ENCODE measurements at regions of chr14 and their contacts with region 1.

Region 1: GRCh38 chr14:30621940-30622830 is at the start of gene SCFD1:
- DNase-seq: peak; percentile 95
- H3K4me3 Mint-ChIP-seq: peak within 1 kb of the TSS; percentile 96
- H3K27ac Mint-ChIP-seq: peak within 1 kb of the TSS; percentile 94
- H3K4me1 Mint-ChIP-seq: peaks cover 35% of the 10 kb centered on the region
- H3K27me3 Mint-ChIP-seq: no peaks in the 10 kb centered on the region
- total RNA-seq, gene SCFD1: 46.1 to 55.2 TPM

Region 2: GRCh38 chr14:29927376-29928116 is 694.6 kb before region 1 on chr14 and contains the start of gene PRKD1:
- CTCF ChIA-PET with region 1: no interaction called
- intact Hi-C with region 1: no loop called
- DNase-seq: no peak
- H3K4me3 Mint-ChIP-seq: peak within 1 kb of the TSS; percentile 49
- H3K27ac Mint-ChIP-seq: no peak within 1 kb of the TSS
- H3K4me1 Mint-ChIP-seq: peaks cover 7% of the 10 kb centered on the region
- H3K27me3 Mint-ChIP-seq: peaks cover 39% of the 10 kb centered on the region
- total RNA-seq, gene PRKD1: not detected

Region 3: GRCh38 chr14:30558675-30559555 is 63.3 kb before region 1 on chr14 and contains the start of gene G2E3:
- CTCF ChIA-PET with region 1: interaction called, 3 read pairs
- intact Hi-C with region 1: loop called (anchors 1 kb)
- DNase-seq: peak; percentile 92
- H3K4me3 Mint-ChIP-seq: peak within 1 kb of the TSS; percentile 100
- H3K27ac Mint-ChIP-seq: peak within 1 kb of the TSS; percentile 99
- H3K4me1 Mint-ChIP-seq: peaks cover 30% of the 10 kb centered on the region
- H3K27me3 Mint-ChIP-seq: no peaks in the 10 kb centered on the region
- total RNA-seq, gene G2E3: 28.6 to 29.1 TPM

Region 4: DNA sequence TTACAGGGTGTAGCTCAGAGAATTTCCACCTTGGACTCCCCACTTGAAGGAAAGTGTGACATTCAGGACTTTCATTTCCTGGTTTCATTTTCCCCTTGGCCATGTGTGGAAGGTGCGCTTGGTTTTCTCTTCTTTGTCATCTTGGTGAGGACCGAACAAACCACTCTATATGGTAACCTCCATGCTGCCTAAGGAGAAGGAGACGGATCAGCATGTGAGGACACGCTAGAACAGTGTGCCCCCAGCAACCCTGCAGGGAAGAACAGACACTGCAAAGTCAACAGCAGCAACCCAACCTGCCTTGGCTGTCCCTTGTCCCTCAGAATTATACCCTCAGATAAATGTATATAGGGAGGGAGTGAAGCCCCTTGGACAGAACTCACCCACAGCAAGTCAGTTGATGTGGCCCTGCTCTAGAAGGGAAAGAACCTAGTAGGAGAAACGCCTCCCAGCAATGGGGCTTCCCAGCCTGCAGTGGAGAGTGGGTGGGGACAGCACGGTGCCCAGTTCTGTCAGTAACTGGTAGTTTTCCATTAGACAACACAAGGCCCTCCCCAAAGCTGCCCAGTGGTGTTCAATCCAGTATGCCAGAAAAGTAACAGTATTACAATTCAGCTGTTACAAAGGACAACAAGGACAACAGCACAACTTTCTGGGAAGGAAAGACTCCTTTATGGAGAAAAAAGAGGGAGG is 233.3 kb after region 1 on chr14:
- CTCF ChIA-PET with region 1: no interaction called
- intact Hi-C with region 1: loop called (anchors 1 kb)
- DNase-seq: peak; percentile 61
- H3K4me3 Mint-ChIP-seq: no peak overlapping the region
- H3K27ac Mint-ChIP-seq: peak overlapping the region; percentile 12
- H3K4me1 Mint-ChIP-seq: peaks cover 17% of the 10 kb centered on the region
- H3K27me3 Mint-ChIP-seq: peaks cover 17% of the 10 kb centered on the region

Region 5: DNA sequence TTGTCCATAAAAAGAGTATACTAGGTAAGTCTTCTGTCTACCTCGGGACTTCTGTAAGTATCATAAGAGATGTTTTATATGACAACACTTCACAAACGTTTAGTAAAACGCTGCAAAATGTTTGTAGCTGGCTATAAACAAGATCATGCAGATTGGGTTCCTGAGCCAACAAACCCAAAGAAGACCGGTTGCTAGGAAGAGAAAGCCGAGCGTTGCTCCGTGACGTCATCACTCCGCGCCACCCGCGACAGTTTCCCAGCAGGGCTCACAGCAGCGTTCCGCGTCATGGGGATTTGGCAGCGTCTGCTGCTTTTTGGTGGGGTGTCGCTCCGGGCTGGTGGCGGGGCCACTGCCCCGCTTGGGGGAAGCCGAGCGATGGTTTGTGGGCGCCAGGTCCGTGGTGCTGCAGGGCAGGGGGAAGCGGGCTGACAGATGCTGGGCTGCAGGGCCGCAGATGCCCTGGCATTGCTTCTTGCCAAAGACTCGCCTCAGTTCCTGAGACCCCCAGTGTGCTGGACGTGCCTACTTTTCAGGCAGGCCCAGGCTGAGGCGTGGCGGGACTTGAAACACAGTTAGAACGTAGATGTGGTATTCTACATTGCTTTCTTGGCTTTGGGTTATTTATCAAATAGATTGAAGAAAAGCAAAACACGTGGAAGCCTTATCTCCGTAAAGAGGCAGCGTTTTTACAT is 939.1 kb after region 1 on chr14 and contains the start of gene NUBPL:
- CTCF ChIA-PET with region 1: no interaction called
- intact Hi-C with region 1: loop called (anchors 5 kb)
- DNase-seq: peak; percentile 98
- H3K4me3 Mint-ChIP-seq: peak within 1 kb of the TSS; percentile 96
- H3K27ac Mint-ChIP-seq: peak within 1 kb of the TSS; percentile 92
- H3K4me1 Mint-ChIP-seq: peaks cover 23% of the 10 kb centered on the region
- H3K27me3 Mint-ChIP-seq: no peaks in the 10 kb centered on the region
- total RNA-seq, gene NUBPL: 11.5 to 13.5 TPM

Measured in activated naive CD4-positive, alpha-beta T cell treated with anti-CD3 and anti-CD28 coated beads for 36 hours (primary cell).